IMR-90 (cell line): ENCODE measurements at regions of chr19 and their contacts with region 1.

Region 1: GRCh38 chr19:54029930-54030490 is 33.7 kb downstream of the VSTM1 start:
- DNase-seq: peak; percentile 54
- ATAC-seq: peak; percentile 80
- H3K4me3 ChIP-seq: no peak overlapping the region
- H3K27ac ChIP-seq: no peak overlapping the region
- H3K4me1 ChIP-seq: no peaks in the 10 kb centered on the region
- H3K27me3 ChIP-seq: no peaks in the 10 kb centered on the region
- CTCF ChIP-seq: peak; percentile 64
- POLR2A ChIP-seq: no peak
- RAD21 ChIP-seq: peak; percentile 71

Region 2: GRCh38 chr19:53792721-53793433 is 237.1 kb before region 1 on chr19:
- CTCF ChIA-PET with region 1: interaction called, 8 read pairs
- POLR2A ChIA-PET with region 1: no interaction called
- dilution Hi-C with region 1: no loop called
- in situ Hi-C with region 1: no loop called
- intact Hi-C with region 1: loop called (anchors 5 kb)
- DNase-seq: peak; percentile 75
- ATAC-seq: peak; percentile 100
- H3K4me3 ChIP-seq: no peak overlapping the region
- H3K27ac ChIP-seq: no peak overlapping the region
- H3K4me1 ChIP-seq: no peaks in the 10 kb centered on the region
- H3K27me3 ChIP-seq: no peaks in the 10 kb centered on the region
- CTCF ChIP-seq: peak; percentile 96
- POLR2A ChIP-seq: no peak
- RAD21 ChIP-seq: peak; percentile 74

Region 3: GRCh38 chr19:53808710-53809125 is 221.3 kb before region 1 on chr19:
- CTCF ChIA-PET with region 1: interaction called, 13 read pairs
- POLR2A ChIA-PET with region 1: no interaction called
- dilution Hi-C with region 1: no loop called
- in situ Hi-C with region 1: loop called (anchors 5 kb)
- intact Hi-C with region 1: loop called (anchors 1 kb)
- DNase-seq: peak; percentile 42
- ATAC-seq: peak; percentile 92
- H3K4me3 ChIP-seq: no peak overlapping the region
- H3K27ac ChIP-seq: no peak overlapping the region
- H3K4me1 ChIP-seq: no peaks in the 10 kb centered on the region
- H3K27me3 ChIP-seq: no peaks in the 10 kb centered on the region
- CTCF ChIP-seq: peak; percentile 67
- POLR2A ChIP-seq: no peak
- RAD21 ChIP-seq: peak; percentile 77

Region 4: GRCh38 chr19:53824134-53824611 is 205.8 kb before region 1 on chr19 and contains the start of gene NLRP12:
- CTCF ChIA-PET with region 1: no interaction called
- POLR2A ChIA-PET with region 1: no interaction called
- dilution Hi-C with region 1: no loop called
- in situ Hi-C with region 1: no loop called
- intact Hi-C with region 1: no loop called
- DNase-seq: no peak
- ATAC-seq: no peak
- H3K4me3 ChIP-seq: no peak within 1 kb of the TSS
- H3K27ac ChIP-seq: no peak within 1 kb of the TSS
- H3K4me1 ChIP-seq: no peaks in the 10 kb centered on the region
- H3K27me3 ChIP-seq: no peaks in the 10 kb centered on the region; the same call in 1 of the 2 replicates
- CTCF ChIP-seq: no peak
- POLR2A ChIP-seq: no peak
- RAD21 ChIP-seq: no peak
- total RNA-seq, gene NLRP12: not detected in 2 replicates

Region 5: DNA sequence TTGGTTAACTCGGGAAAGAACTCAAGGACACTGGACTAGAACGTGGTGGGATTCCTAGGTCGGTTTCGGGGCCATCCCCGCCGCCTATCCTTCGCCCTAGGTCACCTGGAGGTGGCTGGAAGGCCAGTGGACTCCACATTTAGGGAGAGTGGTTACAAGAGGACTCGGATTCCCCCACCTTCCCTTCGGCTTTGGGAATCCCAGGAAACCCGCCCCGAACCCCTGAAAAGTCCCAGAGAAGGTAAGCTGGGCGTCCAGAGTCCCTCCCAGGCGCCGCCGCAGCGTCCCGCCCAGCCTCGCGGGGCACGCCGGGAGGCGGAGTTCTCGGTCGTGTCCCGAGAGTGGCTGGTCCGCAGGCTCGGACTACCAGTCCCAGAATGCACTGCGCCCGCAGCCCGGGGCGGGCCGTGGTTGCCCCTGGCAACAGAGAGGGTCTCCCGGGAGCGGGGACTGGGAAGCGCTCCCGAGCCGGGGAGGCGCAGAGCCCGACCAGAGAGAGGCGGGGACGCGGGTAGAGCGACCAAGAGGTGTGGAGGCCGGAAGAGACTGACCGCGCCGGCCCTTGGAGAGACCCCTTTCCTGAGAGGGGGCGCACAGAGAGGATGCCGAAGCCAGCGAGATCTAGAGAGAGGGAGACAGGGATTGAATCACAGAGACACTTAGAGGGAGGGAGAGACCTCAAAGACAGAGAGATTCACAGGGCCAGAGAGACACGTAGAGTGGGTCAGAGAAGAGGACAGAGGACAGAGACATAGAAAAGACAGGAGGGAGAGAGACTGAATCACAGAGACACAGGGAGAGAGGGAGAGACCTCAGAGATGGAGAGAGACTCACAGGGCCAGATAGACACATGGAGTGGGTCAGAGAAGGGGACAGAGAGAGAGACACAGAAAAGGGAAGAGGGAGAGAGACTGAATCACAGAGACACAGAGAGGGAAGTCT is 150.6 kb before region 1 on chr19:
- CTCF ChIA-PET with region 1: interaction called, 3 read pairs
- POLR2A ChIA-PET with region 1: no interaction called
- dilution Hi-C with region 1: no loop called
- in situ Hi-C with region 1: loop called (anchors 10 kb)
- intact Hi-C with region 1: no loop called
- DNase-seq: peak; percentile 83
- ATAC-seq: peak; percentile 98
- H3K4me3 ChIP-seq: peak overlapping the region; percentile 80
- H3K27ac ChIP-seq: peak overlapping the region; percentile 68
- H3K4me1 ChIP-seq: peaks cover 5% of the 10 kb centered on the region
- H3K27me3 ChIP-seq: peaks cover 34% of the 10 kb centered on the region
- CTCF ChIP-seq: no peak
- POLR2A ChIP-seq: peak; percentile 76
- RAD21 ChIP-seq: no peak

Region 6: DNA sequence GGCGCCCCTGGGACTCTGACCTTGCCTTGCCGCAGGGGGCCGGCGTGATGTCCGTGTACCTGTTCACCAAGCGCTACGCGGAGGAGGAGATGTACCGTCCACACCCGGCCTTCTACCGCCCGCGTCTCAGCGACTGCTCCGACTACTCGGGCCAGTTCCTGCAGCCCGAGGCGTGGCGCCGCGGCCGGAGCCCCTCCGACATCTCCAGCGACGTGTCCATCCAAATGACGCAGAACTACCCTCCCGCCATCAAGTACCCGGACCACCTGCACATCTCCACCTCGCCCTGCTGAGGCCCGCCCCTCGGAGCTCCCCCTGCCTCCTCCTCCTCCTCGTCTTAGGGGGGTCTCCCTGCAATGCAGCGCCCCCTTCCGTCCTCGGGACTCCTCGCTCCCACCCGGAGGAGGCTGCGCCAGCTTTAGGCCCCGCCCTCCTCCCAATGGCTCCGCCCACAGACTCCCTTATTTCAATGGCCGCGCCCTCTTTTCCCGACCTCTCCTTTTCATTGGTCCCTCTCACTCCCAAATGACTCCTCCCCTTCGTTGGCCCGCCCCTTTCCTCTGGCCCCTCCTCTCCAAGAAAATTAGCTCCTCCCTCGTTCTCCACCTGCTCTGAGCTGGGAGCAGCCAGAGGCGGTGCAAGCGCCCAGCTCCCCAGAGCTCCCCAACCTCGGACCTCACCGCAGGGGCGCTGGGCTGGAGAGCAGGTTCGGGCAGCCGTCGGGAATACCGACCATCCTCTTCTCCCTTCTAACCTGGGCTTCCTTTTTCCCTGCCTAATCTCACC is 87.8 kb before region 1 on chr19:
- CTCF ChIA-PET with region 1: no interaction called
- POLR2A ChIA-PET with region 1: no interaction called
- dilution Hi-C with region 1: no loop called
- in situ Hi-C with region 1: no loop called
- intact Hi-C with region 1: no loop called
- DNase-seq: no peak
- ATAC-seq: 0 out of 2 replicates have a peak, but pooled peaks have one; percentile 24
- H3K4me3 ChIP-seq: no peak overlapping the region
- H3K27ac ChIP-seq: no peak overlapping the region
- H3K4me1 ChIP-seq: no peaks in the 10 kb centered on the region
- H3K27me3 ChIP-seq: peaks cover 6% of the 10 kb centered on the region; the same call in 1 of the 2 replicates
- CTCF ChIP-seq: no peak
- POLR2A ChIP-seq: no peak
- RAD21 ChIP-seq: no peak